ENCODE measurements at regions of chr6 and their contacts with region 1.

Region 1: GRCh38 chr6:76866091-76866915 is 597.0 kb downstream of the HTR1B start:
- DNase-seq: no peak

Region 2: DNA sequence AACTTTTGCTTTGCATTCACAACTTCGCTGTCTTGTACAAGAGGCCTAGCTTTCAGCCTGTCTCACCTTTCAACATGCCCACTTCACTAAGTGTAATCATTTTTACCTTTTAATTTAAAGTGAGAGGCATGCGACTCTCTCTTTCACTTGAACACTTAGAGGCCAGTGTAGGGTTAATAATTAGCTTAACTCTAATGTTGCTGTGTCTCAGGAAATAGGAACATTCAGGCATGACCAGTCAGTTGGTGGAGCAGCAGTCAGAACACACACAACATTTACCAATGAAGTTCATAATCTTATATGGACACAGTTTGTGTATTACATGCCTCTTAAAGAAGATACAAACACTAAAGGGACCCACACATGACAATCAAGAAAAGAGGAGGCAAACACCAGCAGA is 549.4 kb after region 1 on chr6:
- intact Hi-C with region 1: loop called in 1 of 2 experiments (anchors 5 kb)
- DNase-seq: no peak

Measured in posterior vena cava (tissue), 2 donors.